ENCODE measurements at regions of chr12 and their contacts with region 1.

Region 1: DNA sequence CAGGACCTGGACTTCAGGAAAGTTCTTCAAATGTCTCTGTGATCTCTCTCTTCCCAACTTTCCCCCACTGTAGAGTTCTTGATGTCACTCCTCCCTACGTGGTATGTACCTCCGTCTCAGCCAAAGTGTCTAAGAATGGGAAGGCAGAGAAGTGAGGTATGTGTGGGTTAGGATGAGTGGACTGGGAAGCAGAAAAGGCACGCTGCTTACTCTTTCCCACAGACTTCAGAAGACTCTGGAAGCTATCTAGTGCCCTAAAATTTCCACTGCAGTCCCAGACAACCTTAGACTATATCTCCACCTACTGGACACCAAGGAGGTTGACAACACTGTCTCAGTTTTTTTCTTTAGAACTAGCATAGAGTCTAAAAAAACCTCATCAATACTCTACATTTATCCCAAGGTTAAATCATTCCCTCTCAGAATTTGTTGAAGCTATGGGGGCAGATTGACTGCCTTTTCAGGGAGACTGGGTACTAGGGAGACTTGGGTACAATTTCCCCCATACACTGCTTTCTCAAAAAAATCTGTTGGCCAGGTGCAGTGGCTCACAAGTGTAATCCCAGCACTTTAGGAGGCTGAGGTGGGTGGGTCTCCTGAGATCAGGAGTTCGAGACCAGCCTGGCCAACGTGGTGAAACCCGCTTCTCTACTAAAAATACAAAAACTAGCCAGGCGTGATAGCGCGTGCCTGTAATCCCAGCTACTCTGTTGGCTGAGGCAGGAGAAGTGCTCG is 20.6 kb upstream of the ITGA5 start:
- DNase-seq: peak in 2 of 9 experiments; percentile 65 to 76
- ATAC-seq: peak; percentile 90
- H3K4me3 ChIP-seq: no peak overlapping the region
- H3K4me3 Mint-ChIP-seq: no peak overlapping the region
- H3K27ac ChIP-seq: no peak overlapping the region
- H3K27ac Mint-ChIP-seq: no peak overlapping the region
- H3K4me1 ChIP-seq: no peaks in the 10 kb centered on the region
- H3K4me1 Mint-ChIP-seq: peaks cover 9% of the 10 kb centered on the region
- H3K27me3 ChIP-seq: peaks cover 0 to 3% of the 10 kb centered on the region in 2 experiments
- H3K27me3 Mint-ChIP-seq: peaks cover 2% of the 10 kb centered on the region
- CTCF ChIP-seq: peak; percentile 82

Region 2: GRCh38 chr12:54385241-54385914 is 54.3 kb before region 1 on chr12:
- CTCF ChIA-PET with region 1: interaction called, 51 read pairs
- POLR2A ChIA-PET with region 1: no interaction called
- intact Hi-C with region 1: no loop called
- DNase-seq: no peak
- ATAC-seq: no peak
- H3K4me3 ChIP-seq: no peak overlapping the region
- H3K4me3 Mint-ChIP-seq: no peak overlapping the region
- H3K27ac ChIP-seq: no peak overlapping the region
- H3K27ac Mint-ChIP-seq: no peak overlapping the region
- H3K4me1 ChIP-seq: no peaks in the 10 kb centered on the region
- H3K4me1 Mint-ChIP-seq: peaks cover 5% of the 10 kb centered on the region
- H3K27me3 ChIP-seq: no peaks in the 10 kb centered on the region
- H3K27me3 Mint-ChIP-seq: no peaks in the 10 kb centered on the region
- CTCF ChIP-seq: no peak

Region 3: DNA sequence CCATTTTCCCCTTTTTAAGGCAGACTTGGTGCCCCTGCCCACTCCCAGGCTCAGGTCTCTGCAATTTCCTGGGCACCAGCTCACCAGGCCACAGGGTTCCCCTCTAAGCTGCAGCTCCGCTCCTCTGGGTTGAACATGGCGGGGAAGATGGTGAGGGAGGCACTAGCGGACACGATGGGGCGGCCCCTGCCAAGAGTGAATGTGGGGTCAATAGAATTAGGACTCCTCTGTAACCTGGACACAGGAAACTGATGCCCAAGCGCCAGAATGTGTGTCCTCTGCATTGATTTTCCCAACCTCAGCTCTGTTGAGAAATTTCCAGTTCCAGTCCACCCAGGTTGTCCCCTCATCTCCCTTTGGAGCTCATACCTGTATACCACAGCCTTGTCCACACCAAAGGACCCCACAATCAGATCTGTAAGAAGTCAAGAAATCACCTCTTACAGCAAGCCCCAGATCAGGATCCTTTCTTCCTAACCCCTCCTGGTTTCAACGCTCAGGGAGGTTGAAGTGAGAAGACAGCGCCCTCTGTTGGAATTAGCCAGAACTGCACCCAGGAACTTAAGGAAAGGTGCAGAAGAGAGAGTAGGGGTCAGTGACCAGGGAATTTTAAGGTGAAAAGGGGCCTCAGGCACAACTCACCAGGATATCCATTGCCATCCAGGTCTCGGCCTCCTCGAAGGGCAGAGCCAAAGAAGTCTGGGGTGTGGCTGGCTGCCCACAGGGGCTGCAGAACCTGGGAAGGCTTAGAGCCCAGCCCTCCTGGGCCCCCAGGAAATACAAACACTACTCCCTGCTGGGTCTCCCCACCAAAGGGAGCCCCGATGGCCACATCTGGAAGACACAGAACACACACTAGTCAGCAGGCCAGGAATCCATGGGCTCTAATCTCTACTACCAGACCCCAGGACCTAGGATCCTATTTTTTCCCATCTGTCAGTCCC is 35.4 kb before region 1 on chr12:
- CTCF ChIA-PET with region 1: interaction called, 1,006 read pairs
- POLR2A ChIA-PET with region 1: interaction called, 23 read pairs
- intact Hi-C with region 1: loop called (anchors 1 kb)
- DNase-seq: peak in 8 of 9 experiments; percentile 41 to 82 (median 72)
- ATAC-seq: peak; percentile 81
- H3K4me3 ChIP-seq: no peak overlapping the region
- H3K4me3 Mint-ChIP-seq: no peak overlapping the region
- H3K27ac ChIP-seq: peak overlapping the region in 1 of 2 experiments; percentile 58
- H3K27ac Mint-ChIP-seq: peak overlapping the region; percentile 90
- H3K4me1 ChIP-seq: peaks cover 18% of the 10 kb centered on the region
- H3K4me1 Mint-ChIP-seq: peaks cover 38% of the 10 kb centered on the region
- H3K27me3 ChIP-seq: no peaks in the 10 kb centered on the region
- H3K27me3 Mint-ChIP-seq: no peaks in the 10 kb centered on the region
- CTCF ChIP-seq: peak; percentile 100

Region 4: DNA sequence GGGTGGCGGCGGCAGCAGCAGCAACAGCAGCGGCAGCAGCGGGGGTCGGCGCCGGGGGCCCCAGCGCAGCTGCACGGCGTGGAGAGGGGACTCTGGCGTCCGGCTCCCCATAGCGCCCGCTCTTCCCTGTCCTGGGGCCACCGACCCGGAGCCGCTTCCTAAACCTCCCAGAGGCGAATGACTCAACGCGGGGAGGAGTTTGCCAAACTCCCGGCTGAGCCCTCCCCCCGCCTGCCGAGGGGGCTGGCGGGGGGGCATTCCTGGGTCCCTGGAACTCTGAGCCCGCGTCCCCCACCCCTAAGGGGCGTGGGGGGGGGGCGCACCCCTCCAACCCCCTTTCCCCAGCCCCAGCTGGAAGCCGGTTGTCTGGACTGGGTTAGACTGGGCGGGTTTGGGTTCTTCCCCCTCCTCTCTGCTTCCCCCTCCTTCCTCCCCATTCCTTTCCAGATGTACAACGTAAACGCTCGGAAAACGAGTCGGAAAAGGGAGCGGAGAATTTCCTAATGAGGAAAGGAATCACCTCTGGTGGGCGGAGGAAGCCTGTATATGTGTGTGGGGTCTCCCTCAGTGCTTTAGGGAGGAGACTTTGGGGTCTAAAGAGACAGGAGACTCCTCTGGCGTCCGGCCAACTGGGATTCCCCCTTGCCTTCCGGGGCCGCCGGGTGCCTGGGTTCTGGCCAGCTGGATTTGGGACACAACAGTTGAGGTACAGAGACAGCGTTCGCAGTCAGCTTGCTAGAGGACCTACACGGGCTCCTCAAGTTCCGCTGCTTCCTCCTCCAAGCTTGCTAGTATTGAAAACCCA is 20.4 kb before region 1 on chr12 and contains the start of gene ITGA5:
- CTCF ChIA-PET with region 1: interaction called, 155 read pairs
- POLR2A ChIA-PET with region 1: interaction called, 7 read pairs
- intact Hi-C with region 1: loop called in 1 of 2 experiments (anchors 2 kb)
- DNase-seq: peak in 5 of 9 experiments; percentile 27 to 76 (median 63)
- ATAC-seq: peak; percentile 33
- H3K4me3 ChIP-seq: peak within 1 kb of the TSS; percentile 92
- H3K4me3 Mint-ChIP-seq: peak within 1 kb of the TSS; percentile 94
- H3K27ac ChIP-seq: peak within 1 kb of the TSS; percentile 71 to 84
- H3K27ac Mint-ChIP-seq: peak within 1 kb of the TSS; percentile 97
- H3K4me1 ChIP-seq: peaks cover 52% of the 10 kb centered on the region
- H3K4me1 Mint-ChIP-seq: peaks cover 53% of the 10 kb centered on the region
- H3K27me3 ChIP-seq: no peaks in the 10 kb centered on the region
- H3K27me3 Mint-ChIP-seq: no peaks in the 10 kb centered on the region
- CTCF ChIP-seq: no peak
- total RNA-seq, gene ITGA5: 115 to 125 TPM